Caco-2 (cell line): ENCODE measurements at regions of chr11 and their contacts with region 1.

Region 1: DNA sequence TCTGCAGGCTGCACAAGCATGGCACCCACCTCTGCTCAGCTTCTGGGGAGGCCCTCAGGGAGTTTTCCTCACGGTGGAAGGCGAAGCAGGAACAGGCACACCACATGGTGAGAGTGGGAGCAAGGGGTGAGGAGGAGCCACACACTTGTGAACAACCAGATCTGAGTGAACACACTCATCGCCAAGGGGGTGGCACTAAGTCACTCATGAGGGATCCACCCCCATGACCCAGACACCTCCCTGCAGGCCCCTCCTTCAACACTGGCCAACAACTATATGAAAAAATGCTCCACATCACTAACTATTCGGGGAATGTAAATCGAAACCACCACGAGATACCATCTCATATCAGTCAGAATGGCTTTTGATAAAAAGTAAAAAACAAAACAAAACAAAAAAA is 722 bp upstream of the KRTAP5-2 start:
- DNase-seq: no peak
- H3K4me3 ChIP-seq: no peak overlapping the region
- H3K4me3 Mint-ChIP-seq: no peak overlapping the region
- H3K27ac Mint-ChIP-seq: no peak overlapping the region
- H3K4me1 ChIP-seq: no peaks in the 10 kb centered on the region
- H3K4me1 Mint-ChIP-seq: no peaks in the 10 kb centered on the region
- H3K27me3 ChIP-seq: no peaks in the 10 kb centered on the region; the same call in 1 of the 2 replicates
- H3K27me3 Mint-ChIP-seq: peaks cover 22% of the 10 kb centered on the region
- CTCF ChIP-seq: no peak

Region 2: DNA sequence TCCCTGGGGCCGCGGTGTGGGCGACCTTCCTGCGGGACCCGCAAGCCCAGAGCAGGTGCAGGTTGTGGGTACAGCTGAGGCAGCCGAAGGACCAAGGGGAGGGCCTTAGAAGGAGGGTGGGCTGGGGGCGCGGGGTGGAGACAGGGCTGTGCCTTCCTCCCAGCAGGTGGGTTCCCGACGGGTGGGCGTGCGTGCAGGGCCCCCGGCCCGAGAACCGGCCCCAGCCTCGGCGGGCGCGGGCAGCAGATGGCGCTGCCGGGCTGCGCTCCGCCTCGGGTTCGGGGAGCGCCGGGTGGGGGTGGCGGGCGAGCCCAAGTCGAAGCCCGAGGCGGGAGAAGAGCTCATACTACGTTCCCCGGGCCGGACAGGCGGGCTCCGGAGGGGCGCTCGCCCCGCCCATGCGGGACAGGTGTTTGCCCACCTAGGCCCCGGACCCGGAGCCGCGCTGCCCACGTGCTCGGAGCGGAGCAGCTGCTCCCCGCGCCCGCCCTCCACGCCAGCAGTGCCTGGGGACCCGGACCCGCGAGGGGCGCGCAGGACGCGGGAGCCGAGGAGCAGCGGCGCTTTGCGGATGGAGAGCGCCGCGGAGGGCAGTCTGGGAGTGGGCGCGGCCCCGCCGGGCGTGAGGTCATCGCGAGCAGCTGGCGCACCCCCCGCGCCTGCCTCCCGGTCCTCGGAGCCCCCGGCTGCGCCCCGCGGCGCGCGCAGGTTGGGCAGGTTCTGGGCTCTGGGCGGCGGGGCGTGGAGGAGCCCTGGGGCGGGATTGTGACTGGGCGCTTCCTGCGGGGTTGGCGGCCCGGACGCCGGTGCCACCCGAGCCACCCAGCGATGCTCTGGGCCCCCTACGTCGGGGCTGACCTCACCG is 52.0 kb before region 1 on chr11:
- CTCF ChIA-PET with region 1: interaction called, 21 read pairs
- POLR2A ChIA-PET with region 1: no interaction called
- intact Hi-C with region 1: no loop called
- DNase-seq: peak in 1 of 2 experiments; percentile 75
- H3K4me3 ChIP-seq: peak overlapping the region; percentile 48
- H3K4me3 Mint-ChIP-seq: peak overlapping the region; percentile 70
- H3K27ac Mint-ChIP-seq: no peak overlapping the region
- H3K4me1 ChIP-seq: peaks cover 13% of the 10 kb centered on the region
- H3K4me1 Mint-ChIP-seq: no peaks in the 10 kb centered on the region
- H3K27me3 ChIP-seq: peaks cover 2% of the 10 kb centered on the region; the same call in 1 of the 2 replicates
- H3K27me3 Mint-ChIP-seq: peaks cover 2% of the 10 kb centered on the region
- CTCF ChIP-seq: peak; percentile 58 to 78

Region 3: GRCh38 chr11:1632053-1632714 is 33.4 kb after region 1 on chr11:
- CTCF ChIA-PET with region 1: interaction called, 13 read pairs
- POLR2A ChIA-PET with region 1: no interaction called
- intact Hi-C with region 1: loop called (anchors 2 kb)
- DNase-seq: no peak
- H3K4me3 ChIP-seq: no peak overlapping the region
- H3K4me3 Mint-ChIP-seq: no peak overlapping the region
- H3K27ac Mint-ChIP-seq: no peak overlapping the region
- H3K4me1 ChIP-seq: no peaks in the 10 kb centered on the region
- H3K4me1 Mint-ChIP-seq: no peaks in the 10 kb centered on the region
- H3K27me3 ChIP-seq: peaks cover 1% of the 10 kb centered on the region; the same call in 1 of the 2 replicates
- H3K27me3 Mint-ChIP-seq: peaks cover 28% of the 10 kb centered on the region
- CTCF ChIP-seq: no peak

Region 4: DNA sequence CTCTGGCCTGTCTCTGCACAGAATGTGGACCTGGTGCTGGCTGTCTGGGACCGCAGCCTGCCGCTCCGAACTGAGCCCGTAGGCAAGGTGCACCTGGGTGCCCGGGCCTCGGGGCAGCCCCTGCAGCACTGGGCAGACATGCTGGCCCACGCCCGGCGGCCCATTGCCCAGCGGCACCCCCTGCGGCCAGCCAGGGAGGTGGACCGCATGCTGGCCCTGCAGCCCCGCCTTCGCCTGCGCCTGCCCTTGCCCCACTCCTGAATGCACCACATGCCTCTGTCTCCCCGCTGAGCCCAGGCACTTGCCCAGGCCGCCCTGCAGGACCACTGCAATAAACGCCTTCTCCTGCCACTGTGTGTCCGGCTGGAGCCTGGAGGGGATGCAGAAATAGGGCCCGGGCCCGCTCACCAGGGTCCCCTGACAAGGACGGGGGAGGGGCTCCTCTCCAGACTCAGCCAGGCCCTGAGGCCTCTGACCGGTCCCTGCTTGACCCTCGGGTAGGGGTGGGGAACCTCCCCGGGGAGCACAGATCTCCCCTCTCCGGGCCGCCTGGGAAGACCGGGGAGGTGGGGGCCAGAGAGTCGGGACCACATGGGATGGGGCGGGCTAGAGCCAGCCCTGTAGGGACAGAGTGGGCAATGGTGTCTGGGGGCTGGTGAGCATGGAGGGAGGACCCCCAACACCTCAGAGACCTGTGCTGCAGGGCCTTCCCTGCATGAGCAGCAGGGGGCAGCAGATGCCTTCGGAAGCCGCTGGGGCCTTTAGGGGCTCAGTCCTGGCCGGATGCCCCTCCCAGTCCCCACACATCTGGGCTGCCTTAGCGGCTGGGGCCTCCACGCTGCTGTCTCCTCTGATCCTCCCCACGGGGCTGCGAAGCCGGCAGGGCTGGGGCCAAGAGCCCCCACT is 238.6 kb after region 1 on chr11:
- CTCF ChIA-PET with region 1: no interaction called
- POLR2A ChIA-PET with region 1: no interaction called
- intact Hi-C with region 1: no loop called
- DNase-seq: peak; percentile 76 to 80
- H3K4me3 ChIP-seq: no peak overlapping the region
- H3K4me3 Mint-ChIP-seq: no peak overlapping the region
- H3K27ac Mint-ChIP-seq: no peak overlapping the region
- H3K4me1 ChIP-seq: peaks cover 44% of the 10 kb centered on the region
- H3K4me1 Mint-ChIP-seq: peaks cover 17% of the 10 kb centered on the region
- H3K27me3 ChIP-seq: no peaks in the 10 kb centered on the region
- H3K27me3 Mint-ChIP-seq: no peaks in the 10 kb centered on the region
- CTCF ChIP-seq: peak; percentile 84 to 91